BJ (cell line): ENCODE measurements at regions of chr2 and their contacts with region 1.

Region 1: DNA sequence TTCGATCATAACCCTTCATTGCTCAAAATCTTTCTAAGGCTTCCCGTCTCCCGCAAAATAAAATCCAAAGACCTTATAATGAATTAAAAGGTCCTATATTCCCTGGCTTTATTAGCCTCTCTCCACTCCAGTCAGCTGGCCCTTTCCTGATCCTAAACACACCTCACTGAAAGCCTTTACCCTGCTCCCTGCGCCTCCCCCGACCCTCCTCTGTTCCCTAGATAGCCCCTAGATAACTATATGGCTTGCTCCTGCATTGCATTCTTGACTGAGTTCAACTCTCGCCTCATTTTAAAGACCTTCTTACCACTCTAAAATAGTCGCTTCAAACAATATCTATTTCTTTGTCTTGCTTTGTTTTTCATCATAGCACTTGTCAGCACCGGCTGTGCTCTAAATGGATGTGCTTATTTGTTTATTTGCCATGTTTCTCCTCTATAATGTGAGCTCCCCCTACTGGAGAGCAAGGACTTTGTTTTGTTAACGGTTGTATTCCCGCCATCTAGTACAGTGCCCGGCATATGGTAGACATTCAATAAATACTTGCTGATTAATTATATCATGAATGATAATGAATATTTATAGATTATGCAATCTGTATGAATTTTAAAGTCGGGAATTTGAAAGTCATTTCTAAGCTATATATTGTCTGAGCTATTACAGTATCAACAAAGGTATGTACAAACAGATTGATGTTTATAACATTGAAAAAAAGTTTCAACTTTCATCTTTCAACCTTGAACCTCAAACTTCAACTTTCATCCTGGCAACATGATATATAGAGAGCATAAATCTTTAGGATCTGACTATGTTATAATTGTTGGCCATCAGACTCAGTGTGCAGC is 32.4 kb upstream of the VIT start:
- DNase-seq: peak; percentile 41
- H3K4me3 ChIP-seq: no peak overlapping the region
- H3K27me3 ChIP-seq: no peaks in the 10 kb centered on the region
- CTCF ChIP-seq: peak; percentile 72

Region 2: GRCh38 chr2:36355151-36355889 is 308.8 kb before region 1 on chr2 and contains the start of gene CRIM1:
- CTCF ChIA-PET with region 1: interaction called, 23 read pairs
- POLR2A ChIA-PET with region 1: no interaction called
- DNase-seq: no peak
- H3K4me3 ChIP-seq: peak within 1 kb of the TSS; percentile 97
- H3K27me3 ChIP-seq: no peaks in the 10 kb centered on the region
- CTCF ChIP-seq: no peak
- polyA plus RNA-seq, gene CRIM1: 427 and 729 TPM in 2 replicates

Region 3: DNA sequence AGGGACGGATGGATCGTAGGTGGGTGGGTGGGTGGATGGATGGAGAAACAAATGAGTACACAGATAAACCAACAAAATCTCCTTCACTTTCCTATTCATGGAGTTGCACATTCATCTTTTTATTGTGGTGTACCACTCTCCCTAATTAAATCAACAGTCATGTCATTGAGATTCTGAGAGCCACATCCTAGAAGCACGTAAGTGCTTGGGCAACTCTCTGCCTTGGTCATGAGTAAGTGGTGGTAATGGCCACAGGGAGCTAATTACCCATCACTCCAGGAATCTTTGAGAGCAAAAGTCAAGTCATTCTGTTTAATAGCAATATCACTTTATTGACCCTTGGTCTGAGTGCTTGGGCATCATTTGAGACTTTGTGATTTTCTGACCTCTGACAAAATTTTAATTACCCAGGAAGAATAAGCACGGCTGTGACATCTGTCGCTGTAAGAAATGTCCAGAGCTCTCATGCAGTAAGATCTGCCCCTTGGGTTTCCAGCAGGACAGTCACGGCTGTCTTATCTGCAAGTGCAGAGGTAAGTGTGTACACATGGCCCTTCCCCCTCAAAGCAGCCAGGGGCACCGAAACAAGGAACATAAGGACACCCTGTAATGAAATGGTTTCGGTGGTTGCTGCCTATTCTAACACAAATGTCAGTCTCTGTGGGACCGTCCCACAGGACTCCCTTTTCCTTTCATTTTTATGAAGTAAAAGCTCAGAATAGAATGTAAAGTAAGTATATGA is 152.0 kb before region 1 on chr2:
- CTCF ChIA-PET with region 1: interaction called, 11 read pairs
- POLR2A ChIA-PET with region 1: no interaction called
- DNase-seq: no peak
- H3K4me3 ChIP-seq: no peak overlapping the region
- H3K27me3 ChIP-seq: no peaks in the 10 kb centered on the region
- CTCF ChIP-seq: no peak

Region 4: GRCh38 chr2:36525245-36525644 is 138.8 kb before region 1 on chr2:
- CTCF ChIA-PET with region 1: interaction called, 12 read pairs
- POLR2A ChIA-PET with region 1: no interaction called
- DNase-seq: no peak
- H3K4me3 ChIP-seq: no peak overlapping the region
- H3K27me3 ChIP-seq: no peaks in the 10 kb centered on the region
- CTCF ChIP-seq: no peak

Region 5: DNA sequence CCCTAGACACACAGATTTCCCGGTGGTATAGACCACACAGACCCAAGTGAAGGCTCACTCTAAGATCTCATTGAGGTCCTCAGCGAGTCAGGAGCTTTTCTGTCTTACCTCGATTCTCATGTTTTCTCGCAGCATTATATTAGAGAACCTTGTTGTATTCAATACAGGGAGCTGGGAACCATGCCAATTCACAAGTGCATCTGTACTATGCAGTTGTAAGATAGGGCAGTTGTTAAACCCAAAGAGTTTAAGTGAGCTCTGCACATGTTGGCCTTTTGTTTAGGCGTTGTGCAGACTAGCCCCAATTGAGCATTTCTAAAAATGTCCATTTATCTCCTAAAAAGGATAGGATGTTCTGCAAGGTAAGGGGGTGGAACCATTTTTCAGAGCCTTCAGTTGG is 125.7 kb before region 1 on chr2:
- CTCF ChIA-PET with region 1: interaction called, 13 read pairs
- POLR2A ChIA-PET with region 1: interaction called, 3 read pairs
- DNase-seq: no peak
- H3K4me3 ChIP-seq: no peak overlapping the region
- H3K27me3 ChIP-seq: no peaks in the 10 kb centered on the region
- CTCF ChIP-seq: no peak

Region 6: DNA sequence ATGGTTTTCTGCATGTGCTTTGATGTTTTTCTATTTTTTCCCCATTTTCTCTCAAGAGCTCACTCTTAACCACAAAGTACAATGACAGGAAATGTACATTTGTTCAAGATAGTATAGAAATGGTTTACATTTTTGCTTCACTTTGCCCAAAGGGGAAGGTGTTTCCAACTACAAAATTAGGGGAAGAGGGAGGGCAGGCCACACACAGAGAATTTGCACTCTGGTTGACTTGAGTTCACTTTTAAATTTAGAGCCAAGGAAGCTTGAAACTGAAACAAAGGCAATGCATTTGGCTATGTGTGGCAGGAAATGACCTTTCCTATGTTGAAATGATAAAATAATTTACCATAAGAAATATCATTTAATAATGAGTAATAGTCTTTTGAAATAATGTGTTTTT is 13.3 kb after region 1 on chr2:
- CTCF ChIA-PET with region 1: interaction called, 13 read pairs
- POLR2A ChIA-PET with region 1: no interaction called
- DNase-seq: no peak
- H3K4me3 ChIP-seq: no peak overlapping the region
- H3K27me3 ChIP-seq: no peaks in the 10 kb centered on the region
- CTCF ChIP-seq: no peak